SK-N-SH (cell line): ENCODE measurements at regions of chr13 and their contacts with region 1.

Region 1: GRCh38 chr13:112873851-112874750 is 94.9 kb upstream of the MCF2L start:
- DNase-seq: peak; percentile 93
- H3K4me3 ChIP-seq: no peak overlapping the region; a peak in 1 of 4 replicates
- H3K27ac ChIP-seq: no peak overlapping the region
- H3K4me1 ChIP-seq: peaks cover 0 to 16% of the 10 kb centered on the region in 2 experiments; a peak in 1 of 4 replicates
- H3K27me3 ChIP-seq: no peaks in the 10 kb centered on the region
- CTCF ChIP-seq: peak; percentile 83
- EP300 ChIP-seq: no peak
- RAD21 ChIP-seq: peak; percentile 91

Region 2: GRCh38 chr13:111474136-111475002 is 1399.7 kb before region 1 on chr13:
- CTCF ChIA-PET with region 1: interaction called, 14 read pairs
- POLR2A ChIA-PET with region 1: no interaction called
- DNase-seq: peak; percentile 75
- H3K4me3 ChIP-seq: no peak overlapping the region; a peak in 1 of 4 replicates
- H3K27ac ChIP-seq: no peak overlapping the region
- H3K4me1 ChIP-seq: no peaks in the 10 kb centered on the region
- H3K27me3 ChIP-seq: peaks cover 46% of the 10 kb centered on the region
- CTCF ChIP-seq: peak; percentile 70
- EP300 ChIP-seq: no peak
- RAD21 ChIP-seq: peak; percentile 81

Region 3: DNA sequence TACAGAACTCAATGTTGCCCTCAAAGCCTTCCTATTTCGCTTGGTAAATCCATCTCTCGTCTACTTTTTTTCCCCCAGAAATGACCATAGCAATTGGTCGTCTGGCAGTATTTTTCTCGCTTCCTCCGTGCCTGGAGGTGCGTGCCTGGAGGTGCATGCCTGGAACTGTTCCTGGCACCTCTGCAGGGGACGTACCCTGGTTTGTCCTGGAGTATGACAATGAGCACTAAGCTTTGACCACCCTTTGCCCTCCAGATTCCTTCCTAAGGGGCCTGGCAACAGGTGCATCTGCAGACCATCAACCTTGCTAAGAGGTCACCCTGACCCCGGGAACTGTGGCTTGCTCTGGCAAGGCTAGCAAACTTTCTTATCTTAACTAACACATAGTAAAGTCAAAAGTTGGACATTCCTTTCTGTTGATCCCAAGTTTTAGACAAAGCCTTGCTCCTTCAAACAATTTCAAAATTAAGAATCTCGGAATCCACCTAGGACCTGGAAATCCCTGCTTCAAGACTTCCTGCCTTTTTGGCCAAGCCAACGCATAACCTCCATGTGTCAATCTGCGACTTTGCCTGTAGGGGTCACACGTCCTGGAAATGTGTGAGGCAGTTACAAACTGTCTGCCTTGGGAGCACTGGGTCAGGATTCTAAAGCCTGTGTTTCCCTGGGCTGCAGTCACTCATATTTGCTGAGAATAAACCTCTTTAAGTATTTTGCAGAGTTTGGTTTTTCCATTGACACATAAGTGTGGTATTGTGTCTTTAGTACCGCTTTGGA is 257.3 kb before region 1 on chr13:
- CTCF ChIA-PET with region 1: interaction called, 16 read pairs
- POLR2A ChIA-PET with region 1: no interaction called
- DNase-seq: peak; percentile 69
- H3K4me3 ChIP-seq: no peak overlapping the region
- H3K27ac ChIP-seq: no peak overlapping the region
- H3K4me1 ChIP-seq: no peaks in the 10 kb centered on the region
- H3K27me3 ChIP-seq: peaks cover 10% of the 10 kb centered on the region; the same call in 1 of the 2 replicates
- CTCF ChIP-seq: peak; percentile 66
- EP300 ChIP-seq: no peak
- RAD21 ChIP-seq: peak; percentile 62

Region 4: GRCh38 chr13:112638157-112638750 is 235.8 kb before region 1 on chr13:
- CTCF ChIA-PET with region 1: interaction called, 29 read pairs
- POLR2A ChIA-PET with region 1: no interaction called
- DNase-seq: no peak
- H3K4me3 ChIP-seq: no peak overlapping the region
- H3K27ac ChIP-seq: no peak overlapping the region
- H3K4me1 ChIP-seq: peaks cover 0 to 10% of the 10 kb centered on the region in 2 experiments; a peak in 1 of 4 replicates
- H3K27me3 ChIP-seq: peaks cover 41% of the 10 kb centered on the region
- CTCF ChIP-seq: no peak
- EP300 ChIP-seq: no peak
- RAD21 ChIP-seq: no peak

Region 5: GRCh38 chr13:112885782-112886268 is 11.7 kb after region 1 on chr13:
- CTCF ChIA-PET with region 1: interaction called, 23 read pairs
- POLR2A ChIA-PET with region 1: no interaction called
- DNase-seq: peak; percentile 96
- H3K4me3 ChIP-seq: peak overlapping the region; percentile 25 to 33; a peak in 3 of 4 replicates
- H3K27ac ChIP-seq: peak overlapping the region in 1 of 2 experiments; percentile 86; a peak in 2 of 4 replicates
- H3K4me1 ChIP-seq: peaks cover 0 to 11% of the 10 kb centered on the region in 2 experiments; a peak in 2 of 4 replicates
- H3K27me3 ChIP-seq: no peaks in the 10 kb centered on the region
- CTCF ChIP-seq: no peak
- EP300 ChIP-seq: no peak; a peak in 2 of 4 replicates
- RAD21 ChIP-seq: no peak